ENCODE measurements at regions of chr3 and their contacts with region 1.

Region 1: GRCh38 chr3:129723558-129724324 is 117.3 kb upstream of the PLXND1 start:
- DNase-seq: peak; percentile 91
- H3K4me3 Mint-ChIP-seq: peak overlapping the region; percentile 77
- H3K27ac Mint-ChIP-seq: peak overlapping the region; percentile 87
- H3K4me1 Mint-ChIP-seq: peaks cover 29% of the 10 kb centered on the region
- H3K27me3 Mint-ChIP-seq: no peaks in the 10 kb centered on the region
- CTCF ChIP-seq: no peak

Region 2: GRCh38 chr3:129650256-129650872 is 73.4 kb before region 1 on chr3:
- CTCF ChIA-PET with region 1: interaction called, 5 read pairs
- POLR2A ChIA-PET with region 1: no interaction called
- intact Hi-C with region 1: loop called (anchors 5 kb)
- DNase-seq: peak; percentile 88
- H3K4me3 Mint-ChIP-seq: no peak overlapping the region
- H3K27ac Mint-ChIP-seq: no peak overlapping the region
- H3K4me1 Mint-ChIP-seq: peaks cover 21% of the 10 kb centered on the region
- H3K27me3 Mint-ChIP-seq: no peaks in the 10 kb centered on the region
- CTCF ChIP-seq: peak; percentile 75

Region 3: GRCh38 chr3:129663026-129663446 is 60.7 kb before region 1 on chr3:
- CTCF ChIA-PET with region 1: interaction called, 3 read pairs
- POLR2A ChIA-PET with region 1: interaction called, 16 read pairs
- intact Hi-C with region 1: loop called (anchors 2 kb)
- DNase-seq: peak; percentile 78
- H3K4me3 Mint-ChIP-seq: peak overlapping the region; percentile 22
- H3K27ac Mint-ChIP-seq: peak overlapping the region; percentile 68
- H3K4me1 Mint-ChIP-seq: peaks cover 30% of the 10 kb centered on the region
- H3K27me3 Mint-ChIP-seq: no peaks in the 10 kb centered on the region
- CTCF ChIP-seq: no peak

Region 4: DNA sequence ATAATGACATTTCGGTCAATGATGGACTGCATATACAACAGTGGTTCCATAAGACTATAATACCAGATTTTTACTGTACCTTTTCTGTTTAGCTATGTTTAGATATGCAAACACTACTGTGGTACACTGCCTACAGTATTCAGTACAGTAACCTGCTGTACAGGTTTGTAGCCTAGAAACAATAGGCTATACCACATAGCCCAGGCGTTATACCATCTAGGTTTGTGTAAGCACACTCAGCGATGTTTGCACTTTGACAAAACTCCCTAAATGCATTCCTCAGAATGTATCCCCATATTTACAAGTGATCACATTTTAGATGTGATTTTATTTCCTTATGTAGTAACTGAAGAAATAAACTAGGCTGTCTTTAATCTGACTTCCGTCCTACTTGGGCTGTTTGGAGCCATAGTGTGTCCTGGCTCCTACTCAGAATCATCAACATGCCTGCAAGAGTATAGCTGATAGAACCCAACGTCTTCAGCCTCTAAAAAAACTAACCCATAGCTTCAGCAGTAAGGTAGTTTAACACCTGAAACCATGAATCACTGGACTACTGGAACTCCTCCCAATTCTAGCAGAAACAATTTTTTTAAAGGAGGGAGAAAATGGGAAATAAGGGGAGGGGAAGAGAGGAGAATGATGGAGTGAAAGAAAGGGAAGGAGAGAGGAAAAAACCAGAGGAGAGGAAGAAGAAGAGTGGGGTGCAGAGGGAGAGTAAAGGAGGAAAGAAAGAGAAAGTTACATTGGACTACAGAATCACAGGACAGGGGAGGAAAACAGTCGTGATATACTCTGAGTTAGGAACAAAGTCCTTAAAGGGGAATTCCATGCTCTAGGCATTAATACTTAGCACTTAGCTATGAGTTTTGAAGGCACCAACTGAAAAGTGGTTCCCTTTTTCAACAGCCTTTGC is 49.6 kb before region 1 on chr3:
- CTCF ChIA-PET with region 1: no interaction called
- POLR2A ChIA-PET with region 1: interaction called, 10 read pairs
- intact Hi-C with region 1: loop called (anchors 2 kb)
- DNase-seq: no peak
- H3K4me3 Mint-ChIP-seq: peak overlapping the region; percentile 14
- H3K27ac Mint-ChIP-seq: no peak overlapping the region
- H3K4me1 Mint-ChIP-seq: peaks cover 9% of the 10 kb centered on the region
- H3K27me3 Mint-ChIP-seq: no peaks in the 10 kb centered on the region
- CTCF ChIP-seq: no peak

Region 5: GRCh38 chr3:129749692-129750091 is 26.0 kb after region 1 on chr3:
- CTCF ChIA-PET with region 1: interaction called, 3 read pairs
- POLR2A ChIA-PET with region 1: interaction called, 10 read pairs
- intact Hi-C with region 1: no loop called
- DNase-seq: peak; percentile 6
- H3K4me3 Mint-ChIP-seq: no peak overlapping the region
- H3K27ac Mint-ChIP-seq: no peak overlapping the region
- H3K4me1 Mint-ChIP-seq: peaks cover 5% of the 10 kb centered on the region
- H3K27me3 Mint-ChIP-seq: no peaks in the 10 kb centered on the region
- CTCF ChIP-seq: no peak

Region 6: GRCh38 chr3:129794311-129795185 is 70.8 kb after region 1 on chr3:
- CTCF ChIA-PET with region 1: interaction called, 6 read pairs
- POLR2A ChIA-PET with region 1: interaction called, 39 read pairs
- intact Hi-C with region 1: loop called (anchors 10 kb)
- DNase-seq: peak; percentile 84
- H3K4me3 Mint-ChIP-seq: peak overlapping the region; percentile 70
- H3K27ac Mint-ChIP-seq: peak overlapping the region; percentile 82
- H3K4me1 Mint-ChIP-seq: peaks cover 33% of the 10 kb centered on the region
- H3K27me3 Mint-ChIP-seq: no peaks in the 10 kb centered on the region
- CTCF ChIP-seq: no peak

Region 7: DNA sequence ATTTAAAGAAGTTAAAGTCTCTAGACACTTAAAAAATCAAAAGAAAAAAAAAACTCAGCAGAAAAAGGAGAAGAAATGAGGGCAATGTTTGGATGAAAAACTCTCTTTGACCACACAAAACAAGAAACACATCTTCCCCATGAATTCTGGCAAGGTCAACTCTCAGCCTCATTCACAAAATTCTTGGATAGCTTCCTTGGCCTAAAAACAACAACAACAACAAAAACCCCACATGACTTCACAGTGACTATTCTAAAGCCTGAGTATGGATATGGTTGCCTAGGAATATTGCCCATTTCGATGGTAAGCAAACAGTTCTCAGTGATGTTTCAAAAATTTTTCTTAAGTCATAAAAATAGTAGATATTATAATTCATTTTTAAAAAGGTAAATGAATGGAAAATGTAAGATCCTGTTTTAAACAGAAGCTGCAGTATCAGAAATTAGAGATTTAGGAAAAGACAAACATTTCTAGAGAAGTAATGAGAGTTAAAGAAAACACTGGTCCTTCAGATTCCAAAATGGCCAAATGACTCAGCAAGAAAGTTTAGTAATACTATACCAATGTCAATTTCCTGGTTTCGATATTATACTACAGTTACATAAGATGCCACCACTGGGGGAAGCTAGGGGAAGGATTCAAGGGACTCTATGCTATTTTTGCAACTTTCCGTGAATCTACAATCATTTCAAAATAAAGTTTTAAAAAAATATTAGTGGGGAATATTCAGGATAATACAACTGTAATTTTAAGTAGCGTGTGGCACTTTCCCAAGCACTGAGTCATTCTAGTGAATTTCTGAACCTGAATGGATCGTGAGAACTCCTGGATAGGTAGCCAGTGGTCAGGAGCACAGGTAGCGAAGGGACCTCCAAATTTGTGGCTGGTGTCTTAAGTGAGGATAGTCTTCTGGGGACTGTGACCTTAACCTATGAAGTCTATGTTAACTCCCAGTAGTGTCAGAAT is 132.0 kb after region 1 on chr3:
- CTCF ChIA-PET with region 1: no interaction called
- POLR2A ChIA-PET with region 1: no interaction called
- intact Hi-C with region 1: no loop called
- DNase-seq: peak; percentile 69
- H3K4me3 Mint-ChIP-seq: peak overlapping the region; percentile 25
- H3K27ac Mint-ChIP-seq: peak overlapping the region; percentile 75
- H3K4me1 Mint-ChIP-seq: no peaks in the 10 kb centered on the region
- H3K27me3 Mint-ChIP-seq: no peaks in the 10 kb centered on the region
- CTCF ChIP-seq: no peak